Ascending aorta (tissue), 2 donors: ENCODE measurements at regions of chr20 and their contacts with region 1.

Region 1: GRCh38 chr20:3781153-3781910 is at the start of gene SPEF1:
- DNase-seq: peak; percentile 61 to 93
- H3K4me3 ChIP-seq: peak within 1 kb of the TSS; percentile 28 to 30
- H3K27ac ChIP-seq: peak within 1 kb of the TSS; percentile 44 to 57
- H3K4me1 ChIP-seq: peaks cover 26 to 38% of the 10 kb centered on the region in 2 donors
- H3K27me3 ChIP-seq: no peaks in the 10 kb centered on the region
- CTCF ChIP-seq: peak; percentile 24 to 50 (median 30)
- total RNA-seq, gene SPEF1: not detected

Region 2: GRCh38 chr20:3767427-3768341 is 13.6 kb before region 1 on chr20 and contains the start of gene ADISSP:
- intact Hi-C with region 1: loop called (anchors 1 kb)
- DNase-seq: peak; percentile 95 to 99
- H3K4me3 ChIP-seq: peak within 1 kb of the TSS; percentile 78
- H3K27ac ChIP-seq: peak within 1 kb of the TSS; percentile 85 to 87
- H3K4me1 ChIP-seq: peaks cover 5 to 11% of the 10 kb centered on the region in 2 donors
- H3K27me3 ChIP-seq: no peaks in the 10 kb centered on the region
- CTCF ChIP-seq: peak in 1 of 3 experiments; percentile 7
- total RNA-seq, gene ADISSP: 48.4 TPM